ENCODE measurements at regions of chr3 and their contacts with region 1.

Region 1: GRCh38 chr3:184417619-184418327 is 37.9 kb downstream of the CHRD start:
- DNase-seq: peak; percentile 44 to 64
- ATAC-seq: peak; percentile 95 to 99
- H3K4me3 ChIP-seq: no peak overlapping the region
- H3K27ac ChIP-seq: no peak overlapping the region
- H3K4me1 ChIP-seq: no peaks in the 10 kb centered on the region
- CTCF ChIP-seq: peak; percentile 65
- EP300 ChIP-seq: no peak
- POLR2A ChIP-seq: no peak
- RAD21 ChIP-seq: peak; percentile 73 to 81

Region 2: DNA sequence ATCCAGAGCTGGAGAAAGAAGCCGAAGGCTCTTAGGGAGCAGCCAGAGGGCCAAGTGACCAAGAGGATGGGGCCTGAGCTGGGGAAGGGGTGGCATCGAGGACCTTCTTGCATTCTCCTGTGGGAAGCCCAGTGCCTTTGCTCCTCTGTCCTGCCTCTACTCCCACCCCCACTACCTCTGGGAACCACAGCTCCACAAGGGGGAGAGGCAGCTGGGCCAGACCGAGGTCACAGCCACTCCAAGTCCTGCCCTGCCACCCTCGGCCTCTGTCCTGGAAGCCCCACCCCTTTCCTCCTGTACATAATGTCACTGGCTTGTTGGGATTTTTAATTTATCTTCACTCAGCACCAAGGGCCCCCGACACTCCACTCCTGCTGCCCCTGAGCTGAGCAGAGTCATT is 28.4 kb before region 1 on chr3:
- CTCF ChIA-PET with region 1: interaction called, 10 read pairs
- POLR2A ChIA-PET with region 1: no interaction called
- DNase-seq: no peak
- ATAC-seq: peak in 1 of 2 experiments; percentile 24; a peak in 2 of 6 replicates
- H3K4me3 ChIP-seq: no peak overlapping the region
- H3K27ac ChIP-seq: no peak overlapping the region
- H3K4me1 ChIP-seq: no peaks in the 10 kb centered on the region
- CTCF ChIP-seq: no peak
- EP300 ChIP-seq: no peak
- POLR2A ChIP-seq: no peak
- RAD21 ChIP-seq: no peak

Region 3: GRCh38 chr3:184469423-184469822 is 51.6 kb after region 1 on chr3:
- CTCF ChIA-PET with region 1: interaction called, 37 read pairs
- POLR2A ChIA-PET with region 1: no interaction called
- DNase-seq: peak; percentile 37 to 41
- ATAC-seq: peak; percentile 77 to 89
- H3K4me3 ChIP-seq: no peak overlapping the region
- H3K27ac ChIP-seq: no peak overlapping the region
- H3K4me1 ChIP-seq: no peaks in the 10 kb centered on the region
- CTCF ChIP-seq: peak; percentile 48
- EP300 ChIP-seq: no peak
- POLR2A ChIP-seq: no peak
- RAD21 ChIP-seq: peak; percentile 47 to 55; a peak in 4 of 5 replicates

Region 4: GRCh38 chr3:184549793-184550577 is 132.2 kb after region 1 on chr3:
- CTCF ChIA-PET with region 1: interaction called, 10 read pairs
- POLR2A ChIA-PET with region 1: no interaction called
- DNase-seq: no peak
- ATAC-seq: no peak
- H3K4me3 ChIP-seq: no peak overlapping the region
- H3K27ac ChIP-seq: no peak overlapping the region
- H3K4me1 ChIP-seq: no peaks in the 10 kb centered on the region
- CTCF ChIP-seq: no peak
- EP300 ChIP-seq: no peak
- POLR2A ChIP-seq: no peak
- RAD21 ChIP-seq: no peak